Activated CD8-positive, alpha-beta T cell treated with anti-CD3 and anti-CD28 coated beads, Interleukin-2, amount 10 ng/mL, durations not matched to agents 7 days and 5 days (primary cell): ENCODE measurements at regions of chr10 and their contacts with region 1.

Region 1: GRCh38 chr10:100508691-100509150 is 10.9 kb downstream of the SEC31B start:
- DNase-seq: peak; percentile 80
- ATAC-seq: peak; percentile 58
- H3K4me3 Mint-ChIP-seq: peak overlapping the region; percentile 78
- H3K27ac Mint-ChIP-seq: peak overlapping the region; percentile 94
- H3K4me1 Mint-ChIP-seq: peaks cover 87% of the 10 kb centered on the region
- H3K27me3 Mint-ChIP-seq: no peaks in the 10 kb centered on the region

Region 2: DNA sequence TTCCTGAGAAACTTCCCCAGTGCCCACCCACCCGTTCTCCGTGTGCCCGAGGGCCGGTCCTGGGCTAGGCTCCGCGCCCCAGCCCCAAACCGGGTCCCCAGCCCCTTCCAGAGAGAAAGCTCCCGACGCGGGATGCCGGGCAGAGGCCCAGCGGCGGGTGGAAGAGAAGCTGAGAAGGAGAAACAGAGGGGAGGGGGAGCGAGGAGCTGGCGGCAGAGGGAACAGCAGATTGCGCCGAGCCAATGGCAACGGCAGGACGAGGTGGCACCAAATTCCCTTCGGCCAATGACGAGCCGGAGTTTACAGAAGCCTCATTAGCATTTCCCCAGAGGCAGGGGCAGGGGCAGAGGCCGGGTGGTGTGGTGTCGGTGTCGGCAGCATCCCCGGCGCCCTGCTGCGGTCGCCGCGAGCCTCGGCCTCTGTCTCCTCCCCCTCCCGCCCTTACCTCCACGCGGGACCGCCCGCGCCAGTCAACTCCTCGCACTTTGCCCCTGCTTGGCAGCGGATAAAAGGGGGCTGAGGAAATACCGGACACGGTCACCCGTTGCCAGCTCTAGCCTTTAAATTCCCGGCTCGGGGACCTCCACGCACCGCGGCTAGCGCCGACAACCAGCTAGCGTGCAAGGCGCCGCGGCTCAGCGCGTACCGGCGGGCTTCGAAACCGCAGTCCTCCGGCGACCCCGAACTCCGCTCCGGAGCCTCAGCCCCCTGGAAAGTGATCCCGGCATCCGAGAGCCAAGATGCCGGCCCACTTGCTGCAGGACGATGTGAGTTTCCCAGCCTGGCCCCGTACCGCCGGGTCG is 161.8 kb before region 1 on chr10 and contains the start of gene SCD:
- CTCF ChIA-PET with region 1: interaction called, 155 read pairs
- POLR2A ChIA-PET with region 1: interaction called, 24 read pairs
- DNase-seq: peak; percentile 95
- ATAC-seq: peak; percentile 94
- H3K4me3 Mint-ChIP-seq: peak within 1 kb of the TSS; percentile 96
- H3K27ac Mint-ChIP-seq: peak within 1 kb of the TSS; percentile 90
- H3K4me1 Mint-ChIP-seq: peaks cover 67% of the 10 kb centered on the region
- H3K27me3 Mint-ChIP-seq: no peaks in the 10 kb centered on the region
- total RNA-seq, gene SCD: 239 to 240 TPM

Region 3: GRCh38 chr10:100433253-100434240 is 75.2 kb before region 1 on chr10:
- CTCF ChIA-PET with region 1: interaction called, 165 read pairs
- POLR2A ChIA-PET with region 1: interaction called, 13 read pairs
- DNase-seq: peak; percentile 99
- ATAC-seq: peak; percentile 96
- H3K4me3 Mint-ChIP-seq: no peak overlapping the region
- H3K27ac Mint-ChIP-seq: no peak overlapping the region
- H3K4me1 Mint-ChIP-seq: peaks cover 15% of the 10 kb centered on the region
- H3K27me3 Mint-ChIP-seq: no peaks in the 10 kb centered on the region

Region 4: GRCh38 chr10:100487529-100487928 is 21.2 kb before region 1 on chr10:
- CTCF ChIA-PET with region 1: interaction called, 253 read pairs
- POLR2A ChIA-PET with region 1: interaction called, 102 read pairs
- DNase-seq: no peak
- ATAC-seq: no peak
- H3K4me3 Mint-ChIP-seq: no peak overlapping the region
- H3K27ac Mint-ChIP-seq: no peak overlapping the region
- H3K4me1 Mint-ChIP-seq: peaks cover 25% of the 10 kb centered on the region
- H3K27me3 Mint-ChIP-seq: no peaks in the 10 kb centered on the region

Region 5: GRCh38 chr10:100529475-100530298 is 21.0 kb after region 1 on chr10 and contains the start of gene NDUFB8:
- CTCF ChIA-PET with region 1: interaction called, 55 read pairs
- POLR2A ChIA-PET with region 1: interaction called, 41 read pairs
- DNase-seq: peak; percentile 92
- ATAC-seq: peak; percentile 89
- H3K4me3 Mint-ChIP-seq: peak within 1 kb of the TSS; percentile 100
- H3K27ac Mint-ChIP-seq: peak within 1 kb of the TSS; percentile 99
- H3K4me1 Mint-ChIP-seq: peaks cover 44% of the 10 kb centered on the region
- H3K27me3 Mint-ChIP-seq: no peaks in the 10 kb centered on the region
- total RNA-seq, gene NDUFB8: 290 to 293 TPM